Caco-2 (cell line): ENCODE measurements at regions of chr11 and their contacts with region 1.

Region 1: DNA sequence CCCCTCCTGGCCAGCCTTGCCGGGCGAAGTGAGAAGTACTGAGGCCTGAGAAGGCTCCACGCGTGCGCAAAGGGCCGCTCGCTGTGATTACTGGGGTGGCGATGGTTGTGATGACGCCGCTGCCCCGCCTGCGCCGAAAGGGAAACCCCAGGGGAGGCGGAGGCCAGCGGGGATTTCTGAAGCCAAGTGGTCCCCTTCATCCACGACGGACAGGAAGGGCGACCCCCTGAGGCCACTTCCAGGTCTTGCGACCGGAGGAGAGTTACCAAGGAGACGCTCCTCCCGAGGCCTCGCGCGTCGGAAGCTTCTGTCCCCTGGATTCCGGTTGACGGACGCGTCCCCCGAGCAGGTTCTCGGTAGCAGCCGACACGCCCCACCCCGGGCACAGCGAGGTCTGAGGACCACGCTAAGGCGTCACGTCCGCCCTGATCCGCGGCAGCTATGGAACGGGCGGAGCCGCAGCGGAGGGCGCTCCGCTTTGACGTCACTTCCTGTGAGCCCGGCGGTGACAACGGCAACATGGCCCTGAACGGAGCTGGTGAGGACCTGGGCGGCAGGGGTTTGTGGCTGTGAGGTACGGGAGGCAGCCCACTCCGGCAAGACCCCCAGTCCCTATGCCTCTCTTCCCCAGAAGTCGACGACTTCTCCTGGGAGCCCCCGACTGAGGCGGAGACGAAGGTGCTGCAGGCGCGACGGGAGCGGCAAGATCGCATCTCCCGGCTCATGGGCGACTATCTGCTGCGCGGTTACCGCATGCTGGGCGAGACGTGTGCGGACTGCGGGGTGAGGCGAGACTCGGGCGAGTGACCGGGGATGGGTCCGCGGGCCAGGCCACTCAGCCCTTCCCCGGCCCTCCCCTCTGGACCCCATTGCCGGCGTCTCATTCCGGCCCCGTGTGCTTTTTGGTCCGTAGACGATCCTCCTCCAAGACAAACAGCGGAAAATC is at the start of gene ZNRD2:
- DNase-seq: peak; percentile 98 to 99
- H3K4me3 ChIP-seq: peak within 1 kb of the TSS; percentile 99
- H3K4me3 Mint-ChIP-seq: peak within 1 kb of the TSS; percentile 98
- H3K27ac Mint-ChIP-seq: peak within 1 kb of the TSS; percentile 97
- H3K4me1 ChIP-seq: peaks cover 31% of the 10 kb centered on the region
- H3K4me1 Mint-ChIP-seq: peaks cover 25% of the 10 kb centered on the region
- H3K27me3 ChIP-seq: no peaks in the 10 kb centered on the region
- H3K27me3 Mint-ChIP-seq: no peaks in the 10 kb centered on the region
- CTCF ChIP-seq: peak; percentile 40 to 58
- total RNA-seq, gene ZNRD2: 52.9 and 53.9 TPM in 2 replicates

Region 2: DNA sequence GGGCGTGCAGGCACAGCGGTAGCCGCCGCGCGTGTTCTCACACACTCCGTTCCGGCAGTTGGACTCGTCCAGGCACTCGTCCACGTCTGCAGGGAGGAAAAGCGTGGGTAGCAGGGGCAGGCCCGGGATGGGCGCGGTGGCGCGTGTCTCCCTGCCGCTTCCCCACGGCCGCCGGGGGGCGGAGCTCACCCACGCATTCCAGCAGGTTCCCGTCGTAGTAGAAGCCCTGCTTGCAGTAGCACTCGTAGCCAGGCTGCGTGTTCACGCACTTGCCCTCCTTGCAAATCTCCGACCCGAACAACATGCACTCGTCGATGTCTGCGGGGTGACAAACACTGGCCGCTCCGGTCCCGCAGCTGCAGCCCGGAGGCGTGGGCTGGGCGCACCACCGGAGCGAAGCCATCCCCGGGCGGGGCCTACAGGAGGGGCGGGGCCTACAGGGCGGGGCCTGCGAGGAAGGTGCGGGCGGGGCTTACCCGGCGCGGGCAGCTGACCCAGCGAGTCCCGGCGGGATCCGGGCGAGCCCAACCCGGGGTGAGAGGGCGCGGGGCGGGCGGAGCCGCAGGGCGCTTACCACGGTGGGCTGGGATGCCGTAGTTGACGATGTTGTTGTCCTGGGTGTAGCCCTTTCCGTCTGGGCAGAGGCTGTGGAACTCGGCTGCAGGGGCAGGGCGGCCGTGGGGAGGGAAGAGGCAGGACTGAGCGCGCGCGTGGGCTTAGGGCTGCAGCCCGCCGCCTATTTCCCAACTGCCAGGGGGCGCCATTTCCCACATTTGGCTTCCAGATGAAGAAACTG is 29.8 kb before region 1 on chr11:
- CTCF ChIA-PET with region 1: interaction called, 23 read pairs
- POLR2A ChIA-PET with region 1: no interaction called
- intact Hi-C with region 1: loop called (anchors 2 kb)
- DNase-seq: peak; percentile 71 to 74
- H3K4me3 ChIP-seq: peak overlapping the region; percentile 21
- H3K4me3 Mint-ChIP-seq: peak overlapping the region; percentile 63
- H3K27ac Mint-ChIP-seq: peak overlapping the region; percentile 46
- H3K4me1 ChIP-seq: peaks cover 14% of the 10 kb centered on the region
- H3K4me1 Mint-ChIP-seq: peaks cover 33% of the 10 kb centered on the region
- H3K27me3 ChIP-seq: no peaks in the 10 kb centered on the region
- H3K27me3 Mint-ChIP-seq: no peaks in the 10 kb centered on the region
- CTCF ChIP-seq: peak; percentile 64

Region 3: DNA sequence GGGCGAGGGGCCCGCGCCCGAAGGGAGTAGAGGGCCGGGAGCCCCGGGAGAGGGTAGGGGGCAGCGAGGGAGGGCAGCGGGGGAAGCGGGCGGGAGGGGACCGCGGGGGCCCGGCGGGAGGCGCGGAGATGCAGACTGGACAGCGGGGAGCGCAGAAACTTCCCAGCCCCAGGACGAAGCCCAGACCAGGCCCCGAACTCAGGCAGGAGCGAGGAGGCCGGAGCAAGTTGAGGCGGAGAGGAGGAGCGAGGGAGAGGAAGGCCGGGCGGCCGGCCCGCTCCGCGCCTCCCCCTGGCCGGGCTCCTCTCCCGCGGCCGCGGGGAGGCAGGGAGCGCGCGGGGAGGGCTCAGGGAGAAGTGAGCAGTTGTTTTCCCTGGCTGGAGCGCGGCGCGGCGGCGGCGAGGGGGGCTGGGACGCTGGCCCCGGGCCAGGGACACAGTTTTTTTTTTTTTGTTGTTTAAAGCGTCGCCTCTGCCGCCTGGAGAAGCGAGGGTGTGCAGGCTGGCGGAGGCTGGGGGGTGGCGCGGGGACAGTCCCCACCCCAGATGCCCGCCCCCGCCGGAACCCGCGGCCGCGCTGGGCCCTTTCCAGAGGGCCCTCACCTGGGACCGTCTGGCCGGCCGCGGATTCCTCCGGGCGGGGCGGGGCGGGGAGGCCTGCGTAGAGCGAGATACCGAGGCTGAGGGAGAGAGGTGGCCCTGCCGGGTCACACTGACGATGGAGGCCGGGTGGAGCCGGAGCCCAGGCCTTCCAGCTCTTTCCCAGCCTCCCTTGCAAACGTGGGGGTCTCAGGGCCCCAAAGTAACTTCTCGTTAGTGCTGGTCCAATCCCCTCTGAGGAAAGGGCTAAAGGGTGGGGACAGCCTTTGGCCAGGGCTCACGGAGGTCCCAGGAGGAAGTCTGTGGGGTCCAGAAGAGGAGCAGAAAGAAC is 12.0 kb before region 1 on chr11 and contains the start of gene LTBP3:
- CTCF ChIA-PET with region 1: interaction called, 11 read pairs
- POLR2A ChIA-PET with region 1: interaction called, 7 read pairs
- intact Hi-C with region 1: loop called (anchors 1 kb)
- DNase-seq: peak; percentile 82 to 85
- H3K4me3 ChIP-seq: peak within 1 kb of the TSS; percentile 70
- H3K4me3 Mint-ChIP-seq: peak within 1 kb of the TSS; percentile 75
- H3K27ac Mint-ChIP-seq: peak within 1 kb of the TSS; percentile 61
- H3K4me1 ChIP-seq: peaks cover 57% of the 10 kb centered on the region
- H3K4me1 Mint-ChIP-seq: peaks cover 41% of the 10 kb centered on the region
- H3K27me3 ChIP-seq: no peaks in the 10 kb centered on the region
- H3K27me3 Mint-ChIP-seq: no peaks in the 10 kb centered on the region
- CTCF ChIP-seq: no peak
- total RNA-seq, gene LTBP3: 87.2 and 91.2 TPM in 2 replicates

Region 4: DNA sequence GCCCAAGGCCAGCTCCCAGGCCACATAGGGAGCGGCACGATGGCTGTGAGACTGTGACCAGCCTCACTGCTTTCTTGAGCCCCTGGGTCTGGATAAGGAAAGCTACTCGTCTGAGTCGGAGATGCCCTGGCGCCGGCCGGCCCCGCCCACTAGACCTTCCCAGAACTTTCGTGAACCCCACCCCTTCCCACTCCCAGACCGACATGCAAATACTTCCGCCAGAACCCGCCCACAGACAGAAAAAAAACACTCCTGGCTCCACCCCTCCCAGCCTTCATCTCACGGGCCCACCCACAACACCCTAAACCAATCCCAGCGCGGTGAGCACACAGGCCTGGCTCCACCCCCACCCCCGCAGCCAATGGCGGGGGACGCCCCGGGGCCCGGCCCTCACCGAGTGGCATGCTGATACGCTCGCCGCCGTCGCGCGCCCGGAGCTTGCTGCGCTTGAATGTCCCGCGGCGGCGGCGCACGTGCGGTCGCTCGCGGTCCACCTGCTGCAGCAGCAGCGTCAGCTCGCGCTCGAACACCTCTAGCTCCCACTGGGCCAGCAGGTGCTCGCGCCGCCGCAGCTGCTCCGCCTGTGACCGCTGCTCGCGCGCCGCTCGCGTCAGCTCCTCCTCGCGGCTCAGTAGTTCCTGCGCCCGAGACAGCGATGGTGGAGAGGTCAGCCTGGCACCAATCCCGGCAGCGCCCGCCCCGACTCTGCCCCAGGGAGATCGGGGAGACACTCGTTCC is 36.8 kb after region 1 on chr11:
- CTCF ChIA-PET with region 1: interaction called, 7 read pairs
- POLR2A ChIA-PET with region 1: interaction called, 3 read pairs
- intact Hi-C with region 1: loop called (anchors 1 kb)
- DNase-seq: peak; percentile 98 to 99
- H3K4me3 ChIP-seq: peak overlapping the region; percentile 47
- H3K4me3 Mint-ChIP-seq: peak overlapping the region; percentile 67
- H3K27ac Mint-ChIP-seq: peak overlapping the region; percentile 43
- H3K4me1 ChIP-seq: peaks cover 15% of the 10 kb centered on the region
- H3K4me1 Mint-ChIP-seq: peaks cover 16% of the 10 kb centered on the region
- H3K27me3 ChIP-seq: no peaks in the 10 kb centered on the region
- H3K27me3 Mint-ChIP-seq: no peaks in the 10 kb centered on the region
- CTCF ChIP-seq: no peak

Region 5: DNA sequence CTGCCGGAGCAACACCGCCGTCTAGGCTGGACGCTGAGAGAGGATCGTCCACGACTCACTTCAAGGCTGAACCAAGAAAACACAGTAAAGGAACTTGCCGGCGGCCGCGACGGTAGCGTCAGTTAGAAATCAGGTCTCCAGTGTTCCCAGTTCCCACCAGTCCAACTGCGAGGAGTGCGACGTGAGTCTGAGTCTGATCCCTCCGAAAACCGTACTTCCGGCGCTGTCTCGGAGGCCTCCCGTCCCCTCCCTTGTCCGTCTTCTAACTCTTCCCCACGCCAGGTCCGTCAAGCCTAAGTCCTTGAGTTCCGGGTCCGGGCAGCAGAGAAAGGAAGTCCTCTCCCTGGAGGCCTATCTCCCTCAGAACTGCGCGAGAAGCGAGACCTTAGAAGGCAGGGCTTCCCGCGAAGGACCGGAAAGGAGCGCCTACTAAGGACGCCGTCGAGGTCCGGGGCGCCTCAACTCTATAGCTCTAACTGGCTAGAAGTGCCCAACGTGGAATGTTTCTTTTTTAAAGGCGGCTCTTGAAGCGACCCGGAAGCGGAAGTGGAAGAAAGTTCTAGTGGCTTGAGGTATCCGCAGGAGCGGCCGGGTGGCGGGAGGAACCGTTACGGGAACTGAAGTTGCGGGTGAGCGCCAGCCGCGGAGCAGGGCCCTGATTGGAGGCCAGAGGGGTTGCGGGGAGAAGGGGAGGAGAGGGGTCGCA is 431.8 kb after region 1 on chr11 and contains the starts of genes BANF1 and EIF1AD:
- CTCF ChIA-PET with region 1: interaction called, 3 read pairs
- POLR2A ChIA-PET with region 1: interaction called, 11 read pairs
- intact Hi-C with region 1: no loop called
- DNase-seq: peak; percentile 96 to 97
- H3K4me3 ChIP-seq: peak within 1 kb of the TSS; percentile 92
- H3K4me3 Mint-ChIP-seq: peak within 1 kb of the TSS; percentile 99
- H3K27ac Mint-ChIP-seq: peak within 1 kb of the TSS; percentile 97
- H3K4me1 ChIP-seq: 0 out of 2 replicates have a peak, but pooled peaks cover 7% of the 10 kb centered on the region
- H3K4me1 Mint-ChIP-seq: no peaks in the 10 kb centered on the region
- H3K27me3 ChIP-seq: no peaks in the 10 kb centered on the region
- H3K27me3 Mint-ChIP-seq: no peaks in the 10 kb centered on the region
- CTCF ChIP-seq: no peak
- total RNA-seq, gene BANF1: 295 and 300 TPM in 2 replicates
- total RNA-seq, gene EIF1AD: 51.2 and 55.3 TPM in 2 replicates